Activated CD4-positive, alpha-beta T cell treated with anti-CD3 and anti-CD28 coated beads for 36 hours (primary cell): ENCODE measurements at regions of chr1 and their contacts with region 1.

Region 1: DNA sequence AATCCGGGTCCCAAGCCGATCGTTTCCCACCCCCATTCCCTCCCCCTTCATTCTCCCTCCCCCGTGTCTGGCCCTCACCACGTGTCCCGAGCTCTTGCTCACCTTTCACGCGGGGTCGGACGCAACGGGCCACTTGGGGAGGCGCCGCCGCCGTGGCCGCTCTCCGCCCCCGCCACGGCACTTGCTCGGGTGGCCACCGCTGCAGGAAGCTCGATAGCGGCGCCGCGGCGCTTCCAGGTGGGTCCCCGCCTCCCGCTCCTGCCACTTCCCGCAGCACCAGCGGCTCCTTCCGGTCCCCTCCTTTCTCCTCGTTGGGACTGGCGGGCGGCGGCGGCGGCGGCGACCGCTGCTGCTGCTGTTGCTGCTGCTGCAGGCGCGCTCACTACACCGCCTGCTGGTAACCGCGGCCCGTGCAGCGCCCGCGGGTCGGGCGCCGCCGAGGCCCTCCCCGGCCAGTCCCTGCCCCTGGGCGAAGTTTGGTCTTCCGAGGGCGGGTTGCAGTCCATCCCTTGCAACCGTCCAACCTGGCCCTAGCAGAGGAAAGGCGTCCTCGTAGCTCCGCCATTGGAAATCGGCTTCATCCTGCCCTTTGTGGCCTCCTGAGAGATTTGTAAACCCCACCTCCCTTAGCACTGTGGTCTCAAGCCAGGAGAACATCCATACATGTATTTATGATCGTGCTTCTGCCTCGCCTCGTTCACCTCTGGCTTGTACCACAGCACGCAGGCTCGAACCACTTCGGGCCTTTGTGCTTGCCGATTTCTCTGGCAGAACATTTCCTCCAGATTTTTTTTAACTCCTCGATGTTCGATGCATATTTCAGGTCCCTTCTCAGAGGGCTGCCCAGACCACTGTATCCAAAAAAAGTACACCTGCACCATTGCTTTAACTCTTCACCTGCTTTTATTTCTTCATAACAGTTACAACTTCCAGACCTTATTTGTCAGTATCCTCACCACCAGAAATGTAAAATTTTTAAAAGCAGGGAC is 996 bp upstream of the ZZZ3 start:
- DNase-seq: peak; percentile 96
- ATAC-seq: peak; percentile 72
- H3K4me3 Mint-ChIP-seq: peak overlapping the region; percentile 98
- H3K27ac Mint-ChIP-seq: peak overlapping the region; percentile 95
- H3K4me1 Mint-ChIP-seq: peaks cover 31% of the 10 kb centered on the region
- H3K27me3 Mint-ChIP-seq: no peaks in the 10 kb centered on the region

Region 2: DNA sequence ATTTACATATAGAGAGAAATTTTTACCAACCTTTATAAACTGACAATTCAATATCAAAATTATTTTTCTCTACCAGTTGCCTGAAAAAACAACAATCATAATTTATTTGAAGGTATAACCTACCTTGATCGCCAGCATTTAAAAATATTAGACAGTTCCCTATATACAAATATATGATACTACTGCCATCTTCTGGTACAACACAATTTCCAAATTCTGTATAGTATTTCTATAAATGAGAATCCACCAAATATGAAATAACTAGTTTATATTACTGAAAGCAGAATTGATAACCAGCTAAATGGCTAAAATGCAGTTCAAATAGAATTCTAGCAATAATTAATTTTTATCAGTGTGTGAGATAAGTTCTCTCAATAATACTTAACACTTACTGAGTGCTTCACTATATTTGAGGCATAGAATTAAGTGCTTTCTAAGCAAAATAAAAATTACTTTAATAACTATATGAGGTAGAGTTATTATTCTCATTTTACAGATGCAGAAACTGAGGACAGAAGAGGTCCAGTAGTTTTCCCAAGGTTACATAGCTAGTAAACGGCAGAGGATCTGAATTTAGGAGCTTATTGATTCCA is 539.8 kb before region 1 on chr1:
- CTCF ChIA-PET with region 1: no interaction called
- POLR2A ChIA-PET with region 1: no interaction called
- intact Hi-C with region 1: loop called in 1 of 2 experiments (anchors 5 kb)
- DNase-seq: no peak
- ATAC-seq: no peak
- H3K4me3 Mint-ChIP-seq: no peak overlapping the region
- H3K27ac Mint-ChIP-seq: no peak overlapping the region
- H3K4me1 Mint-ChIP-seq: peaks cover 4% of the 10 kb centered on the region
- H3K27me3 Mint-ChIP-seq: no peaks in the 10 kb centered on the region

Region 3: DNA sequence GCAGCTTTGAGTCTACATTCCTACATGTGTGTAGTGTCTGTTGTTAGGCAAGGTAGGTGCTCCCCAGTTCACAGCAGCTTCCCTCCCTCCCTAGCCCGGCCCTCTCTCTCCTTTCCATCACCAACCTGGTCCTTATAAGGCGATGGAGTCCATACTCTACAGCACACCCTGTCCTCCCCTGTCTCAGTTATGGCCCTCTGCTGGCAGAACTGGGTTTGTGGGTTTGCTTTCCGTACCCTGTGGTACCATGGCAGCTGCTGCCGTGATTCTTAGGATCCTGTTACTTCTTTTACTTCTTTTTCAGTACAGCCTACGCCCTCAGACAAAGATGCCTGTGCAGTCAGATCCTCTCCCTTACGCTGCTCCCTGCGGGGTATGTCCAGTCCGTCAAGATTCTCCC is 370.0 kb before region 1 on chr1:
- CTCF ChIA-PET with region 1: no interaction called
- POLR2A ChIA-PET with region 1: no interaction called
- intact Hi-C with region 1: loop called in 1 of 2 experiments (anchors 10 kb)
- DNase-seq: peak; percentile 47
- ATAC-seq: peak; percentile 74
- H3K4me3 Mint-ChIP-seq: no peak overlapping the region
- H3K27ac Mint-ChIP-seq: no peak overlapping the region
- H3K4me1 Mint-ChIP-seq: peaks cover 40% of the 10 kb centered on the region
- H3K27me3 Mint-ChIP-seq: no peaks in the 10 kb centered on the region

Region 4: GRCh38 chr1:77504986-77505385 is 178.5 kb before region 1 on chr1:
- CTCF ChIA-PET with region 1: no interaction called
- POLR2A ChIA-PET with region 1: interaction called, 10 read pairs
- intact Hi-C with region 1: no loop called
- DNase-seq: no peak
- ATAC-seq: peak; percentile 49
- H3K4me3 Mint-ChIP-seq: no peak overlapping the region
- H3K27ac Mint-ChIP-seq: peak overlapping the region; percentile 11
- H3K4me1 Mint-ChIP-seq: peaks cover 9% of the 10 kb centered on the region
- H3K27me3 Mint-ChIP-seq: no peaks in the 10 kb centered on the region

Region 5: GRCh38 chr1:77732090-77732489 is 48.6 kb after region 1 on chr1:
- CTCF ChIA-PET with region 1: no interaction called
- POLR2A ChIA-PET with region 1: no interaction called
- intact Hi-C with region 1: no loop called
- DNase-seq: no peak
- ATAC-seq: no peak
- H3K4me3 Mint-ChIP-seq: no peak overlapping the region
- H3K27ac Mint-ChIP-seq: no peak overlapping the region
- H3K4me1 Mint-ChIP-seq: no peaks in the 10 kb centered on the region
- H3K27me3 Mint-ChIP-seq: no peaks in the 10 kb centered on the region

Region 6: DNA sequence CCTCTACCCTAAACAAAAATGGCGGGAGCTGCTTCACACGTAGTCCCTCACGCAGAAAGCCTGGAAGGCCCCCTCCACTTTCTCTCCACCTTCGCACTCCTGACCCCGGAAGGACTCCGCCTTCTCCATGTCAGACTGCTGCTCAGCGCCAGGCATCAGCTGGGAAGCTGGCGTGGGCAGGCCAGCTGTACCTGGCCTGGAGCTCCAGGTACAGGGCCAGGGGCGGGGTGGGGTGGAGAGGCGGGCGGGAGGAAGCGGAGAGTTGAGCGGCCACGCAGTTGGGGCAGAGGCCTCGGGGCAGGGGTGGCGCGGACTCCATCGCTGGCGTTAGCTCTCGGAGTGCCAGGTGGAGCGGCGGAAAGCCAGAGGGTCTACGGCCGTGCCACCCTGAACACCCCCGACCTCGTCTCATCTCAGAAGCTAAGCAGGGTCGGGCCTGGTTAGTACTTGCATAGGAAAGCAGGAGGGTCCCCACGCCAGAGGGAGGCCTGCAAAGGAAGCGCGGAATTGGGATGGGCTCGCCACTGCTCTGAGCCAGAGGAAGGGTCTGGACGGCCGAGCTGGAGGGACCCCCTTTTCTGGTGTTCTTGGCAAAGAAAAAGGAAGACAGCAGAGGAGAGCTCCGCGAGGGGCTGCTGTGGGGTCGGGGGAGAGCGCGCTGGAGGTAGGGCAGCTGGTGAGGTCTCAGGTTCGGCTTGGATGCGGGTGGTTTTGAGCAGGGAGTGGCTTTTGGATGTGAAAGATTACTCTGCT is 96.3 kb after region 1 on chr1 and contains the start of gene MIGA1:
- CTCF ChIA-PET with region 1: interaction called, 3 read pairs
- POLR2A ChIA-PET with region 1: interaction called, 3 read pairs
- intact Hi-C with region 1: loop called (anchors 1 to 5 kb)
- DNase-seq: peak; percentile 91
- ATAC-seq: peak; percentile 96
- H3K4me3 Mint-ChIP-seq: peak within 1 kb of the TSS; percentile 91
- H3K27ac Mint-ChIP-seq: peak within 1 kb of the TSS; percentile 93
- H3K4me1 Mint-ChIP-seq: peaks cover 34% of the 10 kb centered on the region
- H3K27me3 Mint-ChIP-seq: no peaks in the 10 kb centered on the region
- total RNA-seq, gene MIGA1: 7.2 to 9.0 TPM

Region 7: DNA sequence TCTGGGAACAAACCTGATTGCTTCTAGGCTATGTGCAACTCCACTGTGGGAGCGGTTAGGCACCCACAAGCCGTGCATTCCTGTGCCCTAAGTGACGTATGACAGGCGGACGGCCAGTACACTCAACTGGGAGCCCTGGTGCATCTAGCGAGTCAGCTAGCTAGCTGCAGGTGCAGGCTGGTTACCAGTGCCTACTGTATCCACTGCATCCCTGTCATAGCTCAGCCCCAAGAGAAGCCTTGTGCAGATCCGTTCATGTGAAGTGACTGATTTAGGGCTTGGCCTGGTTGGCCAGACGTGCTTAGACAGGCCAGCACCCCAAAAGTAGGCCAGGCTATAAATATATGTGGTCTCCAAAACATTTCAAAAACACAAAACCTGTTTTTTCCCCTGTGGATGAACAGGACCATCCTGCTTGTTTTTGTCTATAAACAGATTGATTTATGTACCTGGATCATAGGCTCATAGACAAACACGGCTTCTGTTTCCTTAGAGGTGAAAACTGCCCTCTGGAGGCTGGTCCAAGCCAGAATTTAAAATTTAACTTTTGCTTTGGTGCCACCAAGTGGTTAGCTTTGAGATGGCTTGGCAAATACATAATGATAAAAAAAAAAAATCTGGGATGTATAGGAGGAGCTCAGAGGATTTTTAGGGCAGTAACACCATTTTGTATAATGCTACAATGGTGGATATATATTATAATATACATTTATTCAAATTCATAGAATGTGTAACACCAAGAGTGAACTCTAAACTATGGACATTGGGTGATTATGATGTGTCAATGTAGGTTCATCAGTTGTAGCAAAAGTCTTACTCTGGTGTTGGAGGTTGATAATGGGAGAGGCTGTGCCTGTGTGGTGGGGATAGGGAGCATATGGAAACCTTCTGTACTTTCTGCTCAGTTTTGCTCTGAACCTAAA is 430.8 kb after region 1 on chr1:
- CTCF ChIA-PET with region 1: no interaction called
- POLR2A ChIA-PET with region 1: no interaction called
- intact Hi-C with region 1: loop called in 1 of 2 experiments (anchors 10 kb)
- DNase-seq: peak; percentile 72
- ATAC-seq: peak; percentile 93
- H3K4me3 Mint-ChIP-seq: no peak overlapping the region
- H3K27ac Mint-ChIP-seq: no peak overlapping the region
- H3K4me1 Mint-ChIP-seq: peaks cover 5% of the 10 kb centered on the region
- H3K27me3 Mint-ChIP-seq: no peaks in the 10 kb centered on the region